H1 (cell line): ENCODE measurements at regions of chr9 and their contacts with region 1.

Region 1: GRCh38 chr9:91591627-91592026 is 168.0 kb upstream of the NFIL3 start:
- DNase-seq: no peak
- H3K4me3 ChIP-seq: no peak overlapping the region
- H3K27ac ChIP-seq: no peak overlapping the region
- H3K4me1 ChIP-seq: peaks cover 0 to 2% (median 0%) of the 10 kb centered on the region in 4 experiments; a peak in 4 of 7 replicates
- H3K27me3 ChIP-seq: no peaks in the 10 kb centered on the region
- CTCF ChIP-seq: no peak
- EP300 ChIP-seq: no peak
- POLR2A ChIP-seq: no peak
- RAD21 ChIP-seq: no peak

Region 2: DNA sequence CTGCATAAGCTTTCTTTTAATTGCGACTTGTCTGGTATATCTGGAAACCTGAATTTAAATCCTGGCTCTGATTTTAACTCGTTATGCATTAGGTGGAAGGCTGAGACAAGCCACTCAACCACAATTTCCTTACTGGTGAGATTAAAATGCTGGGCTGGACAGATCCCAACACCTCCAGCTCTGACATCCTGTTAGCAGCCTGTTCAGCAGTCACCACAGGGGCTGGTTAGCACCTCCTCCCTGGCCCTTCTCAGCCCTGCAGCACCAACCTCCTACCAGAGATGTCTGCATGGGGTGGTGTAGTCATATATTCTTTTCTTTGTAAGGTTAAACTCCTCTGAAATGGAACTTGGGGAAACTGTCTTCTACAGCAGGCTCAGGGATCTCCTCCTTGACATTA is 11.5 kb before region 1 on chr9:
- CTCF ChIA-PET with region 1: interaction called, 13 read pairs
- POLR2A ChIA-PET with region 1: no interaction called
- DNase-seq: no peak
- H3K4me3 ChIP-seq: no peak overlapping the region
- H3K27ac ChIP-seq: no peak overlapping the region
- H3K4me1 ChIP-seq: no peaks in the 10 kb centered on the region; a peak in 2 of 7 replicates
- H3K27me3 ChIP-seq: no peaks in the 10 kb centered on the region
- CTCF ChIP-seq: no peak
- EP300 ChIP-seq: no peak
- POLR2A ChIP-seq: no peak
- RAD21 ChIP-seq: no peak